ENCODE measurements at regions of chr1 and their contacts with region 1.

Region 1: DNA sequence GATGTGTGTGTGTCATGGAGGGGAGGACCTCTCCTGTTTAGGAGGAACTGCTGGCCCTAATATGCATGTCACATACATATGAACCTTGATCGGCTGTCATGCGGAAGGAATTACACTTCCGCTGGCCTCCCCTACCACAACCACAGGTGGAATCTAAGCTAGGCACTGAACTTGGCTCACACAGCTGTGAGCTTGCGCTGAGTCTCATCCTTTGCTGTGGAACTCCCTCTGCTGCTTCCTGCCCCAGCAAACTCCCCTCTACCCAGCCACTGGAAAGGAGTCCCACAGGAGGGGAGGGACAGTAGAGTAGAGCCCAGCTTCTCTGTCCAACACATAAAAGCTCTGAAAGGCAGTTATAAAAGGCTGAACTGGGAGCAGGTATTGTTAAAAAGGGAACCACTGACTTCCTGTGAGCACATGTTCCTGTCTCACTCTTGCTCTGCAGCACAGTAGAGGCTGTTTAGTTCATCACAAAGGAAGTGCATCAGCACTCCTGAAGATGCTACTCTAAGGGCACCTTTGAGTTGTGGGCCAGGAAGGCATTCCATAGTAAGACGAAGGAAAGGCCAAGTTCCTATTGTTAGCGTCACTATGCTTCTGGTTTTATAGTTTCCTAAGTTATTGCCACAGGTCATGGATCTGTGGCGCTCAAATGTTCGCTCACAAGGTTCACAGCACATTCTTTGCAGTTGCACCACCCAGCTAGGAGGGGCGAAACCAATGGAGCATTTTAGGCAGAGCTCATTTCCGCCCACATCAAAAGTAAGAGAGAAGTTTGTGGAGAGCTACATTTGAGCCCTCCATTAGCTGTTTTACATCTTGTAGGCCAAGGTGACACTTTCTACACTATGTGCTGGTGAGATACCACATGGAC is 17.7 kb upstream of the PTPRC start:
- DNase-seq: peak; percentile 77
- ATAC-seq: peak; percentile 75
- H3K4me3 Mint-ChIP-seq: peak overlapping the region; percentile 88
- H3K27ac Mint-ChIP-seq: peak overlapping the region; percentile 97
- H3K4me1 Mint-ChIP-seq: peaks cover 67% of the 10 kb centered on the region
- H3K27me3 Mint-ChIP-seq: no peaks in the 10 kb centered on the region

Region 2: GRCh38 chr1:198443374-198444233 is 177.6 kb before region 1 on chr1:
- POLR2A ChIA-PET with region 1: no interaction called
- DNase-seq: no peak
- ATAC-seq: no peak
- H3K4me3 Mint-ChIP-seq: no peak overlapping the region
- H3K27ac Mint-ChIP-seq: no peak overlapping the region
- H3K4me1 Mint-ChIP-seq: peaks cover under 1% of the 10 kb centered on the region
- H3K27me3 Mint-ChIP-seq: peaks cover 3% of the 10 kb centered on the region

Region 3: GRCh38 chr1:198523182-198523950 is 97.8 kb before region 1 on chr1:
- POLR2A ChIA-PET with region 1: interaction called, 26 read pairs
- DNase-seq: no peak
- ATAC-seq: peak; percentile 71
- H3K4me3 Mint-ChIP-seq: peak overlapping the region; percentile 79
- H3K27ac Mint-ChIP-seq: peak overlapping the region; percentile 89
- H3K4me1 Mint-ChIP-seq: peaks cover 62% of the 10 kb centered on the region
- H3K27me3 Mint-ChIP-seq: no peaks in the 10 kb centered on the region

Region 4: DNA sequence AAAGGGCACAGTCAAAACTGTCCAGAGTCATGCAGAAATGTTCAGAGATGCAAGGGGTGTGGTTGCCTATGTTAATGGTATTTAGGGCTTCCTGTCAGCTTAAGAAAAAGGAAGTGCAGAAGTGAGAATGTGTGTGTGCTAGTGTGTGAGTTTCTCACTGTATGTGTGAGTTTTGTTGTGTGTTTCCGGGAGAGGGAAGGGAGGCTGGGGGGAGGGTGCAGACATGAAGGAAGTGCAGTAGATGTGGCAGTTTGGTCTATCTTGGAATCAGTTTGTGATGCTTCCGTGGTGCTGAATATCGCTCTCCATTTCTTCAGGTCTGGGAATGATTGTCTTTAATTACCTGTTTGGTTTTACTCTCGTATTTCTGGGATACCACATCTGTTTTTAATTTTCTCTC is 64.2 kb before region 1 on chr1:
- POLR2A ChIA-PET with region 1: interaction called, 12 read pairs
- DNase-seq: peak; percentile 50
- ATAC-seq: peak; percentile 94
- H3K4me3 Mint-ChIP-seq: peak overlapping the region; percentile 93
- H3K27ac Mint-ChIP-seq: peak overlapping the region; percentile 87
- H3K4me1 Mint-ChIP-seq: peaks cover 70% of the 10 kb centered on the region
- H3K27me3 Mint-ChIP-seq: no peaks in the 10 kb centered on the region

Region 5: DNA sequence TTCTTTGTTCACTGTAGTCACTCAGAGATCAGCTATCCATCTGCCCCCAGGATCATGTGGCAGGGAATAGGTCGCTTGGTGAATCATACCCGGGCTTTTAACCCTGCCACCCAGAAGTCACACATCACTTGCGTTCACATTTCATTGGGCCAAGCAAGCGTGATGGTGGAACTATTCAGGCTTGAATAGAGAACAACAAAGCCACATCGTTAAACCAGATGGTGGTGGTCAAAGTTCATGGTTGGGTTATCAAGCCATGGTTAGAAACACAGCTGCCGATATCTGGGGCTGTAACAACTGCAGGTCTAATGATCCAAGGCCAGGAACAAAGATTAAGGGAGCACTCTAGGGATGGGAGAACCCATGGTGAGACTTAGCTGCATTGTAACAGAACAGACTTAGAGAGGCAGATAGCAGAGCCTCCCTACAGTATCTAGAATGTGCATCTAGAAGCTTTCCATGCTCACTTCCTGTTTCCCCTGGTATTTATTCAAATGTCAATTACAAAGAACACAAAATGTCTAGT is 22.3 kb before region 1 on chr1:
- POLR2A ChIA-PET with region 1: no interaction called
- DNase-seq: no peak
- ATAC-seq: peak; percentile 68
- H3K4me3 Mint-ChIP-seq: no peak overlapping the region
- H3K27ac Mint-ChIP-seq: peak overlapping the region; percentile 76
- H3K4me1 Mint-ChIP-seq: peaks cover 57% of the 10 kb centered on the region
- H3K27me3 Mint-ChIP-seq: no peaks in the 10 kb centered on the region

Region 6: DNA sequence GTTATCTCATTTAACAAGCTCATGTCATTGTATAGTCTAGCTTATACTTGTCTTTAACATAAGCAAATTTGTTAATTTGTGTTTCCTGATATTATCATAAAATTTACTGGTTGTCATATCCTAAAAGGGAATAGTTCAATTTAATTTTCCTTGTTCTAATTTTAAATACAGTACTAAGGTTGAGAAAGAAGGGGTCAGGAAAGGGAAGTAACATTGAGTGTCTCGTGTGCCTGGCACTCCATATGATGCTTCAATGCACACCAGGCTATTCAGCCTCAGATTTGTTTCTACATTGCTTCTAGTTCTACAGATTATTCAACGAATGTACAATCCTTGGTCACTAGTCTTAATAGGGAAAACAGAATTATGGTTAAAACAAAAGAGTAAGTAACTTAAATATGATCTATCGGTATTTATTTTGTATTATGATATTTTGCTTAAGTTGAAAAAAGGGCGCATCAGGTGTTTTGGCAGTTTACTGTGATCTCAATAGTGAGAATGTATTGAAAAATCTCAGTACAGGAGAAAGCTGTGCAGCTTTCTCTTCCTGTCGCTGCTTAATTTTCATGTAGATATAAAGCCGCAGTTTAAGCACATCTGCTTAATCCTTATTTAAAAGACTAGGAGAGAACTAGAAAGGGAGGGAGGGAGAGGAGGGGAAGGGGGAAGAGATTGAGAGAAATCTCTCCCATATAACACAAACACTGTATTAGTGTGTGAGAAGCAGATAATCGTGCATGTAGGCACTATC is 30.6 kb after region 1 on chr1:
- POLR2A ChIA-PET with region 1: interaction called, 31 read pairs
- DNase-seq: no peak
- ATAC-seq: peak; percentile 22
- H3K4me3 Mint-ChIP-seq: peak overlapping the region; percentile 84
- H3K27ac Mint-ChIP-seq: peak overlapping the region; percentile 87
- H3K4me1 Mint-ChIP-seq: peaks cover 65% of the 10 kb centered on the region
- H3K27me3 Mint-ChIP-seq: no peaks in the 10 kb centered on the region

Region 7: DNA sequence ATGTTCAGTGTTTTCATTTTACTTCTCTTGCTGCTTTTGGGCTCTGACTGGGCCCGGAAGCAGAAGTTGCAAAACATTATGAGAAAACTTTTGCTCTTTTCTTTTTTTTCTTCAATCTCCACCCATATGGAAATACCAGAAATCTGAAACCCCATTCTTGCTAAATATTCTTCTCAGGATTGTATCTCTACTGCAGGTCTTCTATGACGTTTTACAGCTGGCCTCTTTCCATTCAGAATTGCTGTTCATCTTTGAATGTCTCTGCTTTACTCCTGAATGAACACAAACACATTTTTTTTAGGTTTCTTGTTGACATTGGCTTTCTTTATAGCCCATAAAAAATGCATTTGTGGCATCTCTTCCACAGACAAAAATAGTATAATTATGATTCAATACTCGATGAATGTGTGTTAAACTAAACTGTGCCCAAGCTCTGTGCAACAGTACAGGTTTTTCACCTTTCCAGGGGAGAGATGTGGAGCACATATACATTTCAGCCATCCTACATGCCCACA is 36.4 kb after region 1 on chr1:
- POLR2A ChIA-PET with region 1: interaction called, 31 read pairs
- DNase-seq: no peak
- ATAC-seq: peak; percentile 34
- H3K4me3 Mint-ChIP-seq: peak overlapping the region; percentile 83
- H3K27ac Mint-ChIP-seq: peak overlapping the region; percentile 88
- H3K4me1 Mint-ChIP-seq: peaks cover 56% of the 10 kb centered on the region
- H3K27me3 Mint-ChIP-seq: no peaks in the 10 kb centered on the region

Region 8: DNA sequence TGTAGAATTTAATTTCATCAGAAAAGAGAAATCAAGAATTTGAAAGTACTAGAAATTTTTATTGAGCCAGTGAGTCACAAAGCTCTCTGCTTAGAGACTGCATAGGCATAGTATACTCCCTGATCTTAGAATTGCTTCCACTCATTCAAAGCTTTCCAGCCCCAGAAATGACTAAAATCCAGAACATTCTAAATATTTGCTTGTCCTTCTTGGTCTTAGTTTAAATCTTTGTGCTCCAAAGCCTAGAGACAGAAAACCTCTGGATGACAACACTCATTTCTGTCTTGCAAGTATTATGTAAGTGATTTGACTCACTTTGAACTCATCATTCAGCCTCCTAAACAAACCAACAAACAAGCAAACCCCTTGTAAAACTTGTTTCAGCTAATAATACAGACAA is 91.9 kb after region 1 on chr1:
- POLR2A ChIA-PET with region 1: no interaction called
- DNase-seq: no peak
- ATAC-seq: no peak
- H3K4me3 Mint-ChIP-seq: no peak overlapping the region
- H3K27ac Mint-ChIP-seq: peak overlapping the region; percentile 36
- H3K4me1 Mint-ChIP-seq: peaks cover 15% of the 10 kb centered on the region
- H3K27me3 Mint-ChIP-seq: no peaks in the 10 kb centered on the region